ENCODE measurements at regions of chr3 and their contacts with region 1.

Region 1: GRCh38 chr3:184561061-184561912 is at the start of gene EPHB3:
- DNase-seq: peak; percentile 99
- H3K4me3 ChIP-seq: peak within 1 kb of the TSS; percentile 70 to 77
- H3K27ac ChIP-seq: no peak within 1 kb of the TSS; a peak in 1 of 4 replicates
- H3K4me1 ChIP-seq: peaks cover 17 to 42% of the 10 kb centered on the region in 2 experiments
- H3K27me3 ChIP-seq: peaks cover 12% of the 10 kb centered on the region; the same call in 1 of the 2 replicates
- CTCF ChIP-seq: peak; percentile 100
- EP300 ChIP-seq: no peak
- RAD21 ChIP-seq: peak; percentile 100
- polyA plus RNA-seq, gene EPHB3: 2.1 and 4.2 TPM in 2 replicates

Region 2: GRCh38 chr3:184241447-184242296 is 319.6 kb before region 1 on chr3:
- CTCF ChIA-PET with region 1: no interaction called
- POLR2A ChIA-PET with region 1: no interaction called
- DNase-seq: peak; percentile 61
- H3K4me3 ChIP-seq: no peak overlapping the region
- H3K27ac ChIP-seq: no peak overlapping the region
- H3K4me1 ChIP-seq: no peaks in the 10 kb centered on the region; a peak in 1 of 4 replicates
- H3K27me3 ChIP-seq: no peaks in the 10 kb centered on the region
- CTCF ChIP-seq: peak; percentile 27
- EP300 ChIP-seq: no peak
- RAD21 ChIP-seq: peak; percentile 57

Region 3: GRCh38 chr3:184543843-184544512 is 17.3 kb before region 1 on chr3:
- CTCF ChIA-PET with region 1: interaction called, 22 read pairs
- POLR2A ChIA-PET with region 1: no interaction called
- DNase-seq: peak; percentile 83
- H3K4me3 ChIP-seq: peak overlapping the region in 1 of 2 experiments; percentile 50; a peak in 1 of 4 replicates
- H3K27ac ChIP-seq: no peak overlapping the region
- H3K4me1 ChIP-seq: peaks cover 0 to 4% of the 10 kb centered on the region in 2 experiments; a peak in 1 of 4 replicates
- H3K27me3 ChIP-seq: peaks cover 24% of the 10 kb centered on the region
- CTCF ChIP-seq: peak; percentile 87
- EP300 ChIP-seq: no peak
- RAD21 ChIP-seq: peak; percentile 94

Region 4: DNA sequence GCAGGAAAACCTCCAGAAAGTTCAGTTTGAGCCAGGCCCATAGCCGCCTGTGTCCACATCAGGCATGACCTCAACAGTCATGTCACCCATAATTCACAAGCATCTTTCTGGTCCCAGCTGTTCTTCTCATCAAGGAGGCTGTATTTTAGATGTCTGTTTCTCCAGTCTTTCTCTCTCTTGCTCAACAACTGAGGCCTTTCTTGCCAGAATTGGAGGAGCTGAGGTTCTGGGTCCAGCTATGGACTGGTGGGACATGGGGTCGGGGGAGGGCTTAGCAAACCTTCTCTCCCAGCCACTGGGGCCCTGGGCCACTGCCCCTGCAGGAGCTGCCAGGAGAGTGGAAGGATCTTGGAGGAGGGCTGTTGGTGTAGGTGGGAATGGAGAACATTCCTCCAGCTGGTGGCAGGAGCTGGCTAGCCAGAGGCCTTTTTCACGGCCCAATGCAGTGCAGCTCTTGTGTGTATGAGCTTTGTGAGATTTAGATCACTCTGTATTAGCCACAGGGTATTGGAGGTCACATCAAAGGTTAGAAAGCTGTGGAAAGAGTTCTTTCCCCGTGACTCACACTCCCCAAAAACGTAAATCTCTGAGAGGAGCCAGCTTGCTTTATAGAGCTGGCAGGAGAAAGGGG is 127.1 kb after region 1 on chr3:
- CTCF ChIA-PET with region 1: interaction called, 11 read pairs
- POLR2A ChIA-PET with region 1: interaction called, 6 read pairs
- DNase-seq: peak; percentile 25
- H3K4me3 ChIP-seq: no peak overlapping the region
- H3K27ac ChIP-seq: no peak overlapping the region
- H3K4me1 ChIP-seq: peaks cover 0 to 29% of the 10 kb centered on the region in 2 experiments; a peak in 2 of 4 replicates
- H3K27me3 ChIP-seq: no peaks in the 10 kb centered on the region
- CTCF ChIP-seq: no peak
- EP300 ChIP-seq: no peak
- RAD21 ChIP-seq: no peak

Region 5: GRCh38 chr3:184737641-184738535 is 176.6 kb after region 1 on chr3:
- CTCF ChIA-PET with region 1: interaction called, 49 read pairs
- POLR2A ChIA-PET with region 1: interaction called, 3 read pairs
- DNase-seq: no peak
- H3K4me3 ChIP-seq: no peak overlapping the region
- H3K27ac ChIP-seq: no peak overlapping the region
- H3K4me1 ChIP-seq: peaks cover 14 to 15% of the 10 kb centered on the region in 2 experiments; a peak in 2 of 4 replicates
- H3K27me3 ChIP-seq: no peaks in the 10 kb centered on the region
- CTCF ChIP-seq: no peak
- EP300 ChIP-seq: no peak
- RAD21 ChIP-seq: no peak

Region 6: GRCh38 chr3:184765730-184766074 is 204.4 kb after region 1 on chr3:
- CTCF ChIA-PET with region 1: interaction called, 14 read pairs
- POLR2A ChIA-PET with region 1: no interaction called
- DNase-seq: no peak
- H3K4me3 ChIP-seq: no peak overlapping the region
- H3K27ac ChIP-seq: no peak overlapping the region
- H3K4me1 ChIP-seq: peaks cover 0 to 2% of the 10 kb centered on the region in 2 experiments; a peak in 1 of 4 replicates
- H3K27me3 ChIP-seq: no peaks in the 10 kb centered on the region
- CTCF ChIP-seq: no peak
- EP300 ChIP-seq: no peak
- RAD21 ChIP-seq: no peak

Region 7: GRCh38 chr3:184805351-184806038 is 244.2 kb after region 1 on chr3:
- CTCF ChIA-PET with region 1: interaction called, 28 read pairs
- POLR2A ChIA-PET with region 1: no interaction called
- DNase-seq: peak; percentile 69
- H3K4me3 ChIP-seq: no peak overlapping the region
- H3K27ac ChIP-seq: no peak overlapping the region
- H3K4me1 ChIP-seq: peaks cover 0 to 9% of the 10 kb centered on the region in 2 experiments; a peak in 2 of 4 replicates
- H3K27me3 ChIP-seq: no peaks in the 10 kb centered on the region; the same call in 1 of the 2 replicates
- CTCF ChIP-seq: no peak
- EP300 ChIP-seq: peak in 1 of 2 experiments; percentile 35; a peak in 1 of 4 replicates
- RAD21 ChIP-seq: no peak; the same call in 1 of the 2 replicates

Region 8: GRCh38 chr3:184825121-184825820 is 264.0 kb after region 1 on chr3:
- CTCF ChIA-PET with region 1: interaction called, 11 read pairs
- POLR2A ChIA-PET with region 1: no interaction called
- DNase-seq: no peak
- H3K4me3 ChIP-seq: no peak overlapping the region
- H3K27ac ChIP-seq: no peak overlapping the region
- H3K4me1 ChIP-seq: no peaks in the 10 kb centered on the region
- H3K27me3 ChIP-seq: no peaks in the 10 kb centered on the region
- CTCF ChIP-seq: no peak
- EP300 ChIP-seq: no peak
- RAD21 ChIP-seq: no peak

Measured in SK-N-SH (cell line).